Posterior cingulate gyrus (tissue), 11 donors: ENCODE measurements at regions of chrX and their contacts with region 1.

Region 1: GRCh38 chrX:44025555-44025954 is 52.4 kb upstream of the NDP start:
- DNase-seq: no peak

Region 2: GRCh38 chrX:43958529-43958928 is 67.0 kb before region 1 on chrX:
- intact Hi-C with region 1: loop called (anchors 2 kb)
- DNase-seq: peak in 3 of 10 donors; percentile 14 to 75 (median 31)

Region 3: DNA sequence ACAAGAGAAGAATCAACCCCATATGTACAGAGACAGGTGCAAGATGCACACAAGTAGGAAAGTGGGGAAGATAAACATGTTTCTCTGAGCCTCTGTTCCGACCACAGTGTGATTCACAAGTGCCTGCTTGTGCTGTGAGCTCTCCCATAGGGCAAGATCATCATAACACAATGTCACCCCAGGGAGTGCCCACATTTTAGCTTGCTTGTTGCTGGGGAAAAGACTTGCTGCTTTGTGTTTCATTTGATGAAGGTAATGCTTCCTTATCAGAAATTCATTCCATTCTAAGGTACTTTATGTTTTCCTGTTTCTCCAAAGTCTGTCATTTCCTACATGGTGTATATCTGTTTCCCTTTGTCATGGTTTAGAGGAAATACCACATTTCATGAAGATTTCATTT is 1479.7 kb after region 1 on chrX:
- intact Hi-C with region 1: no loop called
- DNase-seq: no peak